ENCODE measurements at regions of chr10 and their contacts with region 1.

Region 1: GRCh38 chr10:127853868-127854768 is 38.6 kb downstream of the CLRN3 start:
- DNase-seq: peak; percentile 63
- ATAC-seq: peak; percentile 86
- H3K4me3 Mint-ChIP-seq: no peak overlapping the region
- H3K27ac Mint-ChIP-seq: no peak overlapping the region
- H3K4me1 Mint-ChIP-seq: no peaks in the 10 kb centered on the region
- H3K27me3 Mint-ChIP-seq: no peaks in the 10 kb centered on the region

Region 2: DNA sequence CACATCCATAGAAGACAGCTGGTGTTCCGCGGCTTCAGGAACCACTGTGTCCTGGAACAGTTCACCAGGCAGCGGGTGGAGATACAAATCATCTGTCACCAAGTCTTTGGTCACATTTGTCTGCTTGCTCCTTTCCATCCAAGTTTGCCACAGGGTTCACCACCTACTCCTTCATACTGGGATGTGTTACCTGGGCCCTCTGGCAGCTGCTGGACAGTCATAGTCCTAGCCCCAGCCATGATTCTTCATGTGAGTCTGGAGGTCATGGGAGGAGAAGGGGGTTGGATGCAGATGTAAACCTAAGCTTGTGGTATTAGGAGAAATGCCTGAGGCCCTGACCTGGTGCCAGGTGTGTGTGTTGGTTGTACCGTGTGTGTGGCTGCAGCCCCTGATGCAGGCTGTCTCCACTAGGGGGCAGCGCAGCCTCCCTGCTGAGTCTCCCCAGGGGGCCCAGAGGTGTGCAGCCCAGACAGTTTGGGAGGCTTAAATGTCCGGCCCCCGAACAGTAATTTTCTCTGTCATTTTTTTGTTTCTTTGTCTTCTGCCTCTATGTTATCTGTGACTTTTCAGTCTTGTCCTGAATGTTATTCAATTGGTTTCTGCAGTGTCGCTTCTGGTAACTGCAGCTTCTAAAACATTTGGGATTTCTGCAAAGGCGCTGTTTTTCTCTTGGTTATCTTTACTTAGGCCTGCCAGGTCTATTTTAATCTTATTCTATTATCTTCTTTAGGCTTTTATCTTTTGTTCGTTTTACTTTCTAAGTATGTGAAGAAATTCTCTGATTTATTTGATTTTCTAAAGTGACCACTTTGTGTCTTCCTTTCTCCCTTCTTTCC is 290.2 kb before region 1 on chr10:
- CTCF ChIA-PET with region 1: interaction called, 11 read pairs
- POLR2A ChIA-PET with region 1: no interaction called
- DNase-seq: peak; percentile 29
- ATAC-seq: peak; percentile 55
- H3K4me3 Mint-ChIP-seq: no peak overlapping the region
- H3K27ac Mint-ChIP-seq: no peak overlapping the region
- H3K4me1 Mint-ChIP-seq: no peaks in the 10 kb centered on the region
- H3K27me3 Mint-ChIP-seq: no peaks in the 10 kb centered on the region

Region 3: GRCh38 chr10:127715782-127716378 is 138.2 kb before region 1 on chr10:
- CTCF ChIA-PET with region 1: interaction called, 17 read pairs
- POLR2A ChIA-PET with region 1: no interaction called
- DNase-seq: no peak
- ATAC-seq: no peak
- H3K4me3 Mint-ChIP-seq: no peak overlapping the region
- H3K27ac Mint-ChIP-seq: no peak overlapping the region
- H3K4me1 Mint-ChIP-seq: no peaks in the 10 kb centered on the region
- H3K27me3 Mint-ChIP-seq: no peaks in the 10 kb centered on the region

Region 4: DNA sequence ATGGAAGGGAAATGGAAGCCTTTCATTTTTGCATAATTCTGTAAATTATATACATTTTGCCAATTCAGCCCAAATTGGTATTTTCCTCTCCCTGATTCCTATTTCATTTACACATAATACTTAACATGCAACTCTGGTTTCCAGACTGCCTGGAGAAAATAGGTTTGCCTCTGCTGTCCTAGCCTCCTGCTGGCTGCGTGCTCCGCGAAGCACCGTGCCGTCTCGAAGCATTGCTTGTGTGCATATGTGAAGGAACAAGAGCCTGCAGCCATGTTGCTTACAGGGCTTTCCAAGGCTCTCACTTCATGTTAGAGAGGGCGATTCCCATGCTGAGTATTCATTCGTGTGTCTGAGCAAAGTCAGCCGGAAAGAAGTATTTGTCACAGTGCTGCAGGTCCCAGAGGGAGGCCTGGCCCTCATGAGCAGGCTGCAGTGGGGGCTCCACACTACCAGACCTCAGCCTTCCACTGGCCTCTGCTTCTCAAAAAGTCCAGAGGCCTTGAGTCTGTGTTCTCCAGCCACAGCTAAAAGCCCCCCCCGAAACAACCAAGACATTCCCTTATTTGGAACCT is 27.9 kb before region 1 on chr10:
- CTCF ChIA-PET with region 1: no interaction called
- POLR2A ChIA-PET with region 1: no interaction called
- DNase-seq: no peak
- ATAC-seq: no peak
- H3K4me3 Mint-ChIP-seq: no peak overlapping the region
- H3K27ac Mint-ChIP-seq: no peak overlapping the region
- H3K4me1 Mint-ChIP-seq: no peaks in the 10 kb centered on the region
- H3K27me3 Mint-ChIP-seq: no peaks in the 10 kb centered on the region